Activated CD4-positive, alpha-beta T cell treated with anti-CD3 and anti-CD28 coated beads for 36 hours (primary cell): ENCODE measurements at regions of chr2 and their contacts with region 1.

Region 1: DNA sequence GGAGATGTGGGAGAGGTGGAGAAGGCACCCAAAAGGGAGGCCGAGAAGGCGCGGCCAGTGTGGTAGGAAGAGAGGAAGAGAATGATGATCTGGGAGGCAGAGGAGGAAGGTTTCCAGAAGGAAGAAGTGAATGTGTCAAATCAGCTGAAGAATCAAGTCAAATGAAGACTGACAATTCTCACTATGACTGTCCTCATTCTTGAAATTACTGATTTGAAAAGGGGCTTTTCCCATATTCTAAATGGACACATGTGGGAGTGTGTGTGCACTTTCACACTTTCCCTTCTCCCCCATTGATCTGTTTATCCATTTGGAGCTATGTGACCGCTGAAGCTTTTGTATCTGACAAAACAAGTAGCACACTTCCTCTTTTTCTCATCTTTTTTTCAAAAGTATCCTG is 6.1 kb downstream of the AFF3 start:
- DNase-seq: peak; percentile 24
- ATAC-seq: peak; percentile 48
- H3K4me3 Mint-ChIP-seq: no peak overlapping the region
- H3K27ac Mint-ChIP-seq: no peak overlapping the region
- H3K4me1 Mint-ChIP-seq: peaks cover 40% of the 10 kb centered on the region
- H3K27me3 Mint-ChIP-seq: no peaks in the 10 kb centered on the region

Region 2: GRCh38 chr2:100064592-100065428 is 71.5 kb before region 1 on chr2:
- CTCF ChIA-PET with region 1: no interaction called
- POLR2A ChIA-PET with region 1: no interaction called
- intact Hi-C with region 1: loop called (anchors 1 kb)
- DNase-seq: no peak
- ATAC-seq: peak; percentile 69
- H3K4me3 Mint-ChIP-seq: no peak overlapping the region
- H3K27ac Mint-ChIP-seq: peak overlapping the region; percentile 40
- H3K4me1 Mint-ChIP-seq: peaks cover 70% of the 10 kb centered on the region
- H3K27me3 Mint-ChIP-seq: peaks cover 3% of the 10 kb centered on the region

Region 3: GRCh38 chr2:100104718-100105677 is 31.3 kb before region 1 on chr2:
- CTCF ChIA-PET with region 1: no interaction called
- POLR2A ChIA-PET with region 1: no interaction called
- intact Hi-C with region 1: loop called in 1 of 2 experiments (anchors 2 kb)
- DNase-seq: peak; percentile 52
- ATAC-seq: peak; percentile 76
- H3K4me3 Mint-ChIP-seq: peak overlapping the region; percentile 72
- H3K27ac Mint-ChIP-seq: peak overlapping the region; percentile 56
- H3K4me1 Mint-ChIP-seq: peaks cover 12% of the 10 kb centered on the region
- H3K27me3 Mint-ChIP-seq: peaks cover 9% of the 10 kb centered on the region